ENCODE measurements at regions of chr9 and their contacts with region 1.

Region 1: GRCh38 chr9:68804911-68805889 is 100.2 kb downstream of the PIP5K1B start:
- DNase-seq: no peak

Region 2: DNA sequence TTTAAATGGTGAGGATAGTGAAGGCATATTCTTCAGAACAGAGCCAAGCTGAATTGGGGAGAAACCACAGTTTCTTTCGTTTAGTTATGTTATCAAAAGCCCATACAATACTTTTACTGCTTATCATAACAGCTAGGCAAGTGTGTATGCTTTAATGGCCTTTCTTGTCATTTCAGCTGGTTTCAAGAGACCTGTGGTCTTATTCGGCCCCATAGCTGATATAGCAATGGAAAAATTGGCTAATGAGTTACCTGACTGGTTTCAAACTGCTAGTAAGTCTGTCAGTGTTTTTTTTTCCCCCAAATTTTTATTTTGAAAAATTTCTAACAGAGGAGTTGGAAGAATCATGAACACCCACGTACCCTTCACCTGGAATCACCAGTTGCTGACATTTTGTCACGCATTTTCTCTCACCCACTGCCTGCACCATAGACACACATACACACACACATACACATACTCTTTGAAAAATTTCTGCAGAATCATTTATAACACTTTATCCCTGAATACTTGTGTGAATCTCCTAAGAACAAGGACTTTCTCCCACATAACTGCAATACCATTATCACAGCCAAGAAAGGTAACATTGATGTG is 432.6 kb after region 1 on chr9:
- intact Hi-C with region 1: loop called in 1 of 2 experiments (anchors 5 kb)
- DNase-seq: no peak